ENCODE measurements at regions of chr1 and their contacts with region 1.

Region 1: GRCh38 chr1:145996433-145997015 is at the start of gene TXNIP:
- DNase-seq: peak; percentile 86 to 96 (median 89)
- H3K4me3 ChIP-seq: peak within 1 kb of the TSS; percentile 99
- H3K4me3 Mint-ChIP-seq: peak within 1 kb of the TSS; percentile 94 to 99 (median 99)
- H3K27ac ChIP-seq: peak within 1 kb of the TSS; percentile 92
- H3K27ac Mint-ChIP-seq: peak within 1 kb of the TSS; percentile 84 to 98 (median 98)
- H3K4me1 ChIP-seq: peaks cover 58% of the 10 kb centered on the region
- H3K4me1 Mint-ChIP-seq: peaks cover 57 to 67% (median 63%) of the 10 kb centered on the region in 3 donors
- H3K27me3 ChIP-seq: no peaks in the 10 kb centered on the region
- H3K27me3 Mint-ChIP-seq: peaks cover 0 to 3% of the 10 kb centered on the region in 2 donors
- total RNA-seq, gene TXNIP: 167 to 170 TPM

Region 2: DNA sequence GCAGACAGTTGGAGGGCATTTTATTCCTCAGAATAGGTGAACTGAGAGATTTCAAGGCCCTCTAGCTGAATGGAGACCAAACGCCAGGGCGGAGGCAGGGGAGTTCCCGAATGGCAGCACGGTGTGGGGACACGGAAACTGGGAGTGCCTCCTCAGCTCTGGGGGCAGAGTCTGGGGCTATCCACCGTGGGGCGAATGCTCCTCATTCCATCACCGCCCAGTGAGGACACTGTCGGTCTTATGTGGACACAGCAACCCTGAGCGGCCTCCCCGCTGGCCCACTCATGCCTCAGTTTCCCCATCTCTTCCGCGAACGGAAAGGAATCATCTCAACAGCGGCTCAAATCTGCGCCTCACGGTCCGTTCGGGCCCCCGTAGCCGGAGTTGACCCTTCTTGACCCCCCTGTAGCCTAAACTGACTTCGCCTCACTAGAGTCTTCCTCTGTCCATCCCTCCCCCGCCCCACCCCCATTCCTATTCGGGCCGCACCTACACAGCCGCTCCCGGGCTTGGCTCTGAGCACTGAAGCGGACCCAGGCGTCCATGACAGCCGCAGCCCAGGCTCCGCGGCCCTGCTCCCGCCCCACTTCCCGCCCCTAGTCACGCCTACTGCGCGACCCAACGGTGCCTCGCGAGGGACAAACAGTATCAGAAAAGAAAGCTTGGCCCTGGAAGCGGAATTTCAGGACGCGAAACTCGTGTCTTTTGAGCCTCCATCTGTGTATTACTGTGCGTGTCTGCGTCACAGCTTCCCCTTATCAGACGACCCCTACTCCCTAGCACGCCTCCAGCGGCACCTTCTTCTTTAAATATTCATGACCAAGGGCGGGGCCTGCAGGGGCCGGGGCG is 78.2 kb before region 1 on chr1 and contains the start of gene PEX11B:
- CTCF ChIA-PET with region 1: no interaction called
- POLR2A ChIA-PET with region 1: interaction called, 16 read pairs
- DNase-seq: peak; percentile 85 to 94 (median 89)
- H3K4me3 ChIP-seq: peak within 1 kb of the TSS; percentile 85
- H3K4me3 Mint-ChIP-seq: peak within 1 kb of the TSS; percentile 90 to 100 (median 97)
- H3K27ac ChIP-seq: peak within 1 kb of the TSS; percentile 68
- H3K27ac Mint-ChIP-seq: peak within 1 kb of the TSS; percentile 83 to 98 (median 96)
- H3K4me1 ChIP-seq: peaks cover 21% of the 10 kb centered on the region
- H3K4me1 Mint-ChIP-seq: peaks cover 52 to 66% (median 60%) of the 10 kb centered on the region in 3 donors
- H3K27me3 ChIP-seq: no peaks in the 10 kb centered on the region
- H3K27me3 Mint-ChIP-seq: no peaks in the 10 kb centered on the region
- total RNA-seq, gene PEX11B: 42.0 to 43.1 TPM

Region 3: DNA sequence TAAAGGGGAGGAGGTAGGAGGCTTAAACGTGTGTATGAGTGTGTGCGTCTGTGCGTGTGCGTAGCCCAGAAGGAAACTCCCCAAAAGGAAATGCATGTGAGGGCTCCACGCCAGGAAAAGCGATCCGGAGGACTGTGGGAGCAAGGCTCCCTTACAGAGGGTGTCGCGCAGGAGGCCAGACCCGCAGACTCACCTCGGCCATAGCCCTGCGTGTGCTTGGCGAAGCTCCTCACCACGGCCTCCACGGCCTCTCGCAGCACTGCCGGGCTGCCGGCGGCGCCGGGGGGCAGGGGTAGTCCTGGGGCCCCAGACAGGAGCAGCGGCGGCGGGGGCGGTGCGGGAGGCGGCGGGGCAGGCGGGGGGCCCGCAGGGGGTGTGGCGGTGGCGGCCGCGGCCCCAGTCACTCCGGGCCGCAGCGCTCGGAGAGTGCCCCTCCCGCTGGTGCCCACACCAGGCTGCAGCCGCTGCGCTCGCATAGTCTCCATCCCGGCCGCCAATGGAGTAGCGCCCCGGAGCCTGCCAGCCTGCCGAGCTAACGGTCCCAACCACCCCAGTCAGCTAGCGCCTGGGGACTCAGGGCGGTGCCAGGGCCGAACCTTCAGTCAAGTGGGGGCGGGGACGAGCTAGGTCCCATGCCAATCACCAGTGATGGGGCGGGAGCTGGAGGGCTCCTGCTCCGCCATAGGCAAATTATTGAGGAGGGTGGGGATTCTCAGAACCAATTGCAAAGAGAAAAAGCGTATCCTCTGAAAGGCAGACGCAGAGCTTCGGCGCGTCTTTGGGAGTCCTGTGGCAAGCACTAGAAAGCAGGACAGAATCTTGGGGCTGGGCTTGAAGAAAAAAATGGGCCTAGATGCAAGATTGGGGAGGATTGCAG is 38.8 kb before region 1 on chr1 and contains the start of gene LIX1L:
- CTCF ChIA-PET with region 1: interaction called, 4 read pairs
- POLR2A ChIA-PET with region 1: interaction called, 17 read pairs
- DNase-seq: peak; percentile 92 to 96 (median 93)
- H3K4me3 ChIP-seq: peak within 1 kb of the TSS; percentile 94
- H3K4me3 Mint-ChIP-seq: peak within 1 kb of the TSS; percentile 83 to 98 (median 92)
- H3K27ac ChIP-seq: peak within 1 kb of the TSS; percentile 76
- H3K27ac Mint-ChIP-seq: peak within 1 kb of the TSS; percentile 91 to 98 (median 97)
- H3K4me1 ChIP-seq: peaks cover 64% of the 10 kb centered on the region
- H3K4me1 Mint-ChIP-seq: peaks cover 68 to 74% (median 74%) of the 10 kb centered on the region in 3 donors
- H3K27me3 ChIP-seq: no peaks in the 10 kb centered on the region
- H3K27me3 Mint-ChIP-seq: peaks cover 0 to 3% of the 10 kb centered on the region in 2 donors
- total RNA-seq, gene LIX1L: 41.8 to 42.6 TPM

Region 4: GRCh38 chr1:145978854-145979759 is 17.4 kb before region 1 on chr1:
- CTCF ChIA-PET with region 1: interaction called, 475 read pairs
- POLR2A ChIA-PET with region 1: interaction called, 229 read pairs
- DNase-seq: peak; percentile 52 to 89 (median 80)
- H3K4me3 ChIP-seq: peak overlapping the region; percentile 55
- H3K4me3 Mint-ChIP-seq: no peak overlapping the region
- H3K27ac ChIP-seq: peak overlapping the region; percentile 76
- H3K27ac Mint-ChIP-seq: no peak overlapping the region
- H3K4me1 ChIP-seq: peaks cover 69% of the 10 kb centered on the region
- H3K4me1 Mint-ChIP-seq: peaks cover 6 to 34% (median 14%) of the 10 kb centered on the region in 3 donors
- H3K27me3 ChIP-seq: no peaks in the 10 kb centered on the region
- H3K27me3 Mint-ChIP-seq: no peaks in the 10 kb centered on the region

Region 5: GRCh38 chr1:146007506-146008133 is 11.1 kb after region 1 on chr1:
- CTCF ChIA-PET with region 1: interaction called, 37 read pairs
- POLR2A ChIA-PET with region 1: interaction called, 20 read pairs
- DNase-seq: no peak
- H3K4me3 ChIP-seq: no peak overlapping the region
- H3K4me3 Mint-ChIP-seq: peak overlapping the region in 6 of 7 donors; percentile 69 to 87 (median 82)
- H3K27ac ChIP-seq: no peak overlapping the region
- H3K27ac Mint-ChIP-seq: peak overlapping the region; percentile 47 to 93 (median 75)
- H3K4me1 ChIP-seq: peaks cover 33% of the 10 kb centered on the region
- H3K4me1 Mint-ChIP-seq: peaks cover 31 to 50% (median 39%) of the 10 kb centered on the region in 3 donors
- H3K27me3 ChIP-seq: no peaks in the 10 kb centered on the region
- H3K27me3 Mint-ChIP-seq: no peaks in the 10 kb centered on the region

Region 6: GRCh38 chr1:146020058-146021049 is 23.8 kb after region 1 on chr1:
- CTCF ChIA-PET with region 1: no interaction called
- POLR2A ChIA-PET with region 1: no interaction called
- DNase-seq: no peak
- H3K4me3 ChIP-seq: no peak overlapping the region
- H3K4me3 Mint-ChIP-seq: peak overlapping the region in 2 of 7 donors; percentile 17 to 55
- H3K27ac ChIP-seq: no peak overlapping the region
- H3K27ac Mint-ChIP-seq: peak overlapping the region in 1 of 8 donors; percentile 11
- H3K4me1 ChIP-seq: peaks cover 8% of the 10 kb centered on the region
- H3K4me1 Mint-ChIP-seq: peaks cover 8 to 14% (median 9%) of the 10 kb centered on the region in 3 donors
- H3K27me3 ChIP-seq: peaks cover 31% of the 10 kb centered on the region
- H3K27me3 Mint-ChIP-seq: peaks cover 21 to 79% of the 10 kb centered on the region in 2 donors

Region 7: GRCh38 chr1:146049436-146049835 is 52.9 kb after region 1 on chr1:
- CTCF ChIA-PET with region 1: no interaction called
- POLR2A ChIA-PET with region 1: no interaction called
- DNase-seq: peak in 1 of 5 donors; percentile 50
- H3K4me3 ChIP-seq: no peak overlapping the region
- H3K4me3 Mint-ChIP-seq: peak overlapping the region in 2 of 7 donors; percentile 29 to 31
- H3K27ac ChIP-seq: no peak overlapping the region
- H3K27ac Mint-ChIP-seq: peak overlapping the region in 5 of 8 donors; percentile 29 to 85 (median 59)
- H3K4me1 ChIP-seq: no peaks in the 10 kb centered on the region
- H3K4me1 Mint-ChIP-seq: peaks cover 19 to 39% (median 32%) of the 10 kb centered on the region in 3 donors
- H3K27me3 ChIP-seq: no peaks in the 10 kb centered on the region
- H3K27me3 Mint-ChIP-seq: no peaks in the 10 kb centered on the region

Measured in CD8-positive, alpha-beta memory T cell (primary cell).